ENCODE measurements at regions of chr3 and their contacts with region 1.

Region 1: GRCh38 chr3:68893600-68894239 is 38.6 kb downstream of the TAFA4 start:
- DNase-seq: peak in 1 of 2 donors; percentile 68
- ATAC-seq: no peak
- H3K4me3 ChIP-seq: no peak overlapping the region
- H3K4me3 Mint-ChIP-seq: no peak overlapping the region
- H3K27ac ChIP-seq: no peak overlapping the region
- H3K27ac Mint-ChIP-seq: no peak overlapping the region
- H3K4me1 ChIP-seq: no peaks in the 10 kb centered on the region
- H3K4me1 Mint-ChIP-seq: no peaks in the 10 kb centered on the region
- H3K27me3 ChIP-seq: no peaks in the 10 kb centered on the region
- H3K27me3 Mint-ChIP-seq: peaks cover 13% of the 10 kb centered on the region in 2 donors
- CTCF ChIP-seq: peak; percentile 64

Region 2: DNA sequence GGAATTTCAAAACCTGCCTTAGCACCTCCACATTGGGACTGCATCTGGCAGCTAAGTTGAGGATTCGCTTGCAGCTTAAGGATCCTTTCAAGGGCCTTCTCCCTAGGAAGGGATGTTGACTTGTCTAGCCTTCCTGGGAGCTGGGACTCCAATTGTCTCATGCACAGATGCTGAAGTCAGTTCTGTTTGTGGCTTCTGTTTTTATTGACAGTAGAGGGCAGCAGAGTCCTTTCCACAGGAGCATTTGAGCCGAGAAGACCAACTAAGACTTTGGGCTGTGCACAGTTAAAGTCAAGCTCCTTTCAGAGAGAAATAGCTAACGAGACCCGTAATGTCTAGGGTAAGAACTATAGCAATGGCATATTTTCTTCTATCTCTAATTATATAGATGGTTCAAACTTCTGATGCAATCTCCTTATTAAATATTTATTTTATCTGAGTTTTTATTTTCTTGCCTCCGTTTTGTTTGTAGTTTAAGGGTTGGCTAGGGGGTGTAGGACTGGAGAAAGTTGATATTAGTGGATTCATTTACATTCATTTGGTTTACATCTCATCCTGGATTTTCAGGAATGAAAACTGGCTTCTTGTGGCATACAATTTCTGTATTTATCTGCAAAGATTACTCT is 1955.3 kb before region 1 on chr3:
- intact Hi-C with region 1: loop called (anchors 5 kb)
- DNase-seq: peak in 1 of 2 donors; percentile 69
- ATAC-seq: peak in 1 of 3 donors; percentile 52
- H3K4me3 ChIP-seq: no peak overlapping the region
- H3K4me3 Mint-ChIP-seq: no peak overlapping the region
- H3K27ac ChIP-seq: no peak overlapping the region
- H3K27ac Mint-ChIP-seq: no peak overlapping the region
- H3K4me1 ChIP-seq: no peaks in the 10 kb centered on the region
- H3K4me1 Mint-ChIP-seq: no peaks in the 10 kb centered on the region
- H3K27me3 ChIP-seq: peaks cover 2% of the 10 kb centered on the region
- H3K27me3 Mint-ChIP-seq: peaks cover 11 to 32% of the 10 kb centered on the region in 2 donors
- CTCF ChIP-seq: peak; percentile 16

Region 3: GRCh38 chr3:67384760-67385397 is 1508.8 kb before region 1 on chr3:
- intact Hi-C with region 1: loop called (anchors 5 kb)
- DNase-seq: peak in 1 of 2 donors; percentile 60
- ATAC-seq: peak in 2 of 3 donors; percentile 38 to 50
- H3K4me3 ChIP-seq: no peak overlapping the region
- H3K4me3 Mint-ChIP-seq: no peak overlapping the region
- H3K27ac ChIP-seq: no peak overlapping the region
- H3K27ac Mint-ChIP-seq: no peak overlapping the region
- H3K4me1 ChIP-seq: no peaks in the 10 kb centered on the region
- H3K4me1 Mint-ChIP-seq: peaks cover 14 to 15% of the 10 kb centered on the region in 2 donors
- H3K27me3 ChIP-seq: no peaks in the 10 kb centered on the region
- H3K27me3 Mint-ChIP-seq: no peaks in the 10 kb centered on the region
- CTCF ChIP-seq: peak; percentile 39

Region 4: DNA sequence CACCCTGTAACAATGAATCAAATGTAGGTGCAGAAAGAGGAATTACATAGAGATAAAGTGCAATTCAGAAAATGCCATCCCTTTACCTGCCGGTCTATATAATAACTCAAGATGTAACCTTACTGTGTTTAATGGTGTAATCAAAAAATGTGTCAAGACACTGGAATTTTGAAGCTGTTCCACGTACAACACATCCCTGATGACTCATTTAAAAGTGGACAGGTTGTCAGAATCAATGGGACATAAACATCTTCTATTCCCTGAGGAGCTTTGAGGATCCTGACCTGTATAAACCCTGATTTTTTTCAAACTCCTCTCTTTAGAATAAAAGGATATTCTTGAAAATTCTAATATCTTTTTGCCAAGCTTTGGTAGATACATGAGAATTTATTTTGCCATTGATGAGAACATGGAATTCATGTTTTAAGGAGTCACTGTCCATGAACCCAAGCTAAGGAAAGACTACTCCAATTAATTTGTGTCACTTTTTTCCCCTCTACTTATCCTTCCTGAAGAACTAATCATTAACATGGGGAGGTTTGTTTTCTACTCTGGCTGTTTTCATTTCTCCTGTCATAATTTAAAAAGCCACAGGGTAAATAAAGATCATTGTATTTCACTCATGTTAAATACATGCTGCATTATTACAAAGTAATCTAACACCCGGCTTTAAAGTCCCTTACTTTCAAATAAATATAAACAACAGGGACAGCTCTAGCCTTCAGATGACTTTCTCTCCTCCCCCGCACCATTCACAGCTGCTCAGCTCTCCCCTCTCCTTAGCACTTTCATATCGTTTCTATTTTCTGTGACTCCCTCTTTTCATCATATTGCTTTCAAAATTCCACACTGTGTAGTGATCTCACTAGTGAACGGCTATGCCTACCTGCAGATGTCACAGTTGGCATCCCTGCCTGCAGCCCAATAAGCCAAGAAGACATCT is 99.7 kb before region 1 on chr3:
- intact Hi-C with region 1: no loop called
- DNase-seq: no peak
- ATAC-seq: no peak
- H3K4me3 ChIP-seq: no peak overlapping the region
- H3K4me3 Mint-ChIP-seq: no peak overlapping the region
- H3K27ac ChIP-seq: no peak overlapping the region
- H3K27ac Mint-ChIP-seq: no peak overlapping the region
- H3K4me1 ChIP-seq: no peaks in the 10 kb centered on the region
- H3K4me1 Mint-ChIP-seq: no peaks in the 10 kb centered on the region
- H3K27me3 ChIP-seq: no peaks in the 10 kb centered on the region
- H3K27me3 Mint-ChIP-seq: no peaks in the 10 kb centered on the region
- CTCF ChIP-seq: no peak

Region 5: DNA sequence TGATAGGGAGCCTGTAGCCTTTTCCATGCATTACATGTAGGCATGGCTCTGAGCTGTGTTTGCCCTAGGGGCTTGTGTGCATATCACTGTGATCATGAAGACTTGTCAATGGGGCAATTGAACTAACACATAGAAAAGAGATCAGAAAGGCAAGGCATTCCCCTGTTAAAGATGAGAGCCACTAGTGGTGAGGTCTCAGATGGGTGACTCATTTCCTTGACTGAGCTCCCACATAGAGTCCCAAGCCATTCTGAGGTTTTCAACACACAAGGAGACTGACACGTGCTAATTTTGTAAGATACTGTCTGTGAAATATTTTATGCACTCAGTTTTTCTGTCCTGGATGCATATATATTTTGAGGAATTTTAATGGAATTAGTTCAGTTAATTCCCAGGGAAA is 1159.6 kb after region 1 on chr3:
- intact Hi-C with region 1: no loop called
- DNase-seq: no peak
- ATAC-seq: no peak
- H3K4me3 ChIP-seq: no peak overlapping the region
- H3K4me3 Mint-ChIP-seq: no peak overlapping the region
- H3K27ac ChIP-seq: no peak overlapping the region
- H3K27ac Mint-ChIP-seq: no peak overlapping the region
- H3K4me1 ChIP-seq: no peaks in the 10 kb centered on the region
- H3K4me1 Mint-ChIP-seq: no peaks in the 10 kb centered on the region
- H3K27me3 ChIP-seq: no peaks in the 10 kb centered on the region
- H3K27me3 Mint-ChIP-seq: peaks cover 0 to 2% of the 10 kb centered on the region in 2 donors
- CTCF ChIP-seq: no peak

Measured in natural killer cell (primary cell).